PC-3 (cell line): ENCODE measurements at regions of chr12 and their contacts with region 1.

Region 1: DNA sequence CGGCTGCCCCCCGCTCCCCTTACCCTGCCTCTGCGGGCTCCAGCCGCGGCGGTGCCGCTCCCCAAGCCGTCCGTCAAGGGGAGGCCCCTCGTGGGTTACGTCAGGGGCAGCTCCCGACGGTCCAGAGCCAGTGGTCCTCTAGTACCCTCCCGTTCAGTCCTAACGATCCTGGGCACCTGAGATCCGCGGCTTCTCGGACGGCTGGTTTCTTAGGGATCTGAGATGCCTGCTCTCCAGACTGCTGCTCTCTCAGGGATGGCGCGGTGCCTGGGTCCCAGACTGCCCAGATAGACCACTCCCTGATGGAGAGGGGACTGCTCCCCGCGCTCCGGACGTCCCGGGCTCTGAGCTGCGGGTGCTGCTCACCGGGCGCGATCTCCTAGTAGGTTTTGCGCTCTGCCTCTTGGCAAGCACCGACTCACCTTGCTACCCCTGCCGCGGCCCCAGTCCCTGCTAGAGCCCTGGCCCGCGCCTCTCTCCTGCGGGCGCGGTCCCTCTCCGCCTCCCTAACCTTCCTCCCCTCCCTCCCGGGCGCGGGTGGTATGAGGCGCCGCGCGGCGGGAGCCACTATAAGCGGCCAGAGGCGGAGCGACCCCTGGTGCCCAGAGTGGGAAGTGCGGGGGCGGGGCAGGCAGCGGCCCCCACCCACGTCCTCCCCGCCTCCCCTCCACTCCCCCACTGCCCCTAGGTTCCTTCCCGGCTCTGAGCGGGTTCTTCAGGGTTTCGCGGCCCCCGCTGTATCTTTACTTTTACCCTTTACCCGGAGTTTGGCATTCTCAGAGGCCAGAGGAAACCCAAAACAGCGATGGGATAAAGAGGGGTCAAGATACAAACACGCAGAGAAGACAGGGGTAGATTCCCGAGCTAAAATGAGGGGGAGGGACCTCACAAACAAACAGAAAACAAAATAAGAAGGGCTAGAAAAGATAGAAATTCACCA is at the start of gene C1QL4:
- DNase-seq: peak; percentile 86
- ATAC-seq: peak; percentile 85
- H3K4me3 ChIP-seq: peak within 1 kb of the TSS; percentile 78
- H3K27ac ChIP-seq: no peak within 1 kb of the TSS
- H3K4me1 ChIP-seq: no peaks in the 10 kb centered on the region
- H3K27me3 ChIP-seq: no peaks in the 10 kb centered on the region
- CTCF ChIP-seq: peak; percentile 92
- total RNA-seq, gene C1QL4: 5.3 and 6.9 TPM in 2 replicates

Region 2: DNA sequence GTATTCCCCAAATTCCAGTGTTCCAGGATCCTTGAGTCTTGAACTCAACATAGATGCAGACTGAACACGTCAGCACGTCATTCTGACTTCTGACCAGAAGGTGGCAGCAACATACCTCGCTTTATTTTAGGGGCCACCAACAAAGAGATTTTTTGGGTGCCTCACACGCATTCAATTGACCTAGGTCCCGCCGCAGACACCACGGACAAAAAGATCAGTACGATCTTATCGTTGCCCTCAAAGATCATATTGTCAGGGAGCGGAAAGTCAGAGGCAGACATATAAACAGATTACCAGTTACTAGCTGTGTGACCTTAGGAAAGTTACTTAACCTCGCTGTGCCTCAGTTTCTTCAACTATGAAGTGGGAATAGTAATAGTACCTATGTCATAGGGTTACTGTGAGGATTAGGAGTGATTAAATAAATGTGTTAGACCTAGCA is 48.5 kb before region 1 on chr12:
- CTCF ChIA-PET with region 1: interaction called, 5 read pairs
- POLR2A ChIA-PET with region 1: no interaction called
- intact Hi-C with region 1: loop called (anchors 2 kb)
- DNase-seq: peak; percentile 74
- ATAC-seq: peak; percentile 49; the same call in 1 of the 2 replicates
- H3K4me3 ChIP-seq: no peak overlapping the region
- H3K27ac ChIP-seq: no peak overlapping the region
- H3K4me1 ChIP-seq: no peaks in the 10 kb centered on the region
- H3K27me3 ChIP-seq: no peaks in the 10 kb centered on the region
- CTCF ChIP-seq: peak; percentile 96

Region 3: GRCh38 chr12:49489720-49490119 is 152.8 kb after region 1 on chr12:
- CTCF ChIA-PET with region 1: no interaction called
- POLR2A ChIA-PET with region 1: no interaction called
- intact Hi-C with region 1: no loop called
- DNase-seq: peak; percentile 75
- ATAC-seq: peak; percentile 85
- H3K4me3 ChIP-seq: no peak overlapping the region
- H3K27ac ChIP-seq: peak overlapping the region; percentile 51
- H3K4me1 ChIP-seq: peaks cover 23% of the 10 kb centered on the region
- H3K27me3 ChIP-seq: no peaks in the 10 kb centered on the region
- CTCF ChIP-seq: peak; percentile 44